ENCODE measurements at regions of chr13 and their contacts with region 1.

Region 1: DNA sequence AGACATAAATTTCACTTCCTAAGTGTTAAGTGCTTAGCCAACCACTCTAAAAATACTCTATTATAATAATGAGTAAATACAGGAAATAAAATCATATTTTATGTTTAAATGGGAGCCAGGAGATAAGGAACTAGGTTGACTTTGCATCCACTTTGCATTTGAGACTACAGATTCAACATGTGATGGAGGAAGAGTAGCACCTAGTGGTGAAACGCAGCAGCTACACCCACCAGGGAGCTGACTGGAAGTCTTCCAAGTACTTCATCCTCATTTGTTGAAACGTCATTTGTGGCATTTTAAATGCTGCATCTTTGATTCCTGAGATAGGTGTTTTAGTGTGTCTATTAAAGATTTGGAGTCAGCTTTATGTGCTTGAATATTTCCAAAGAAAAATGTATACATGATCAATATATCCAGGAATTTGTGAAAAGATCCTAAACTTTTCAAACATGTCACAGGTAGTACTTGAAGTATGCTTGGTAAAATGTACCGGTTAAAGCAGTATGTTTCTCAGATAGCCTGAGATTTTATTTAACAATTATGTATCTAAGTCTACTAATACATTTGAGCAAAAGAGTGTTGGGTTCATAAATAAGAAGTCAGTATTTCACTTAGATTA is 17.4 kb upstream of the KCTD12 start:
- DNase-seq: peak; percentile 89
- H3K4me3 ChIP-seq: no peak overlapping the region
- H3K27ac ChIP-seq: no peak overlapping the region
- H3K4me1 ChIP-seq: peaks cover 5% of the 10 kb centered on the region
- H3K27me3 ChIP-seq: peaks cover 3 to 12% of the 10 kb centered on the region in 2 experiments
- CTCF ChIP-seq: peak; percentile 93 to 97
- POLR2A ChIP-seq: no peak

Region 2: DNA sequence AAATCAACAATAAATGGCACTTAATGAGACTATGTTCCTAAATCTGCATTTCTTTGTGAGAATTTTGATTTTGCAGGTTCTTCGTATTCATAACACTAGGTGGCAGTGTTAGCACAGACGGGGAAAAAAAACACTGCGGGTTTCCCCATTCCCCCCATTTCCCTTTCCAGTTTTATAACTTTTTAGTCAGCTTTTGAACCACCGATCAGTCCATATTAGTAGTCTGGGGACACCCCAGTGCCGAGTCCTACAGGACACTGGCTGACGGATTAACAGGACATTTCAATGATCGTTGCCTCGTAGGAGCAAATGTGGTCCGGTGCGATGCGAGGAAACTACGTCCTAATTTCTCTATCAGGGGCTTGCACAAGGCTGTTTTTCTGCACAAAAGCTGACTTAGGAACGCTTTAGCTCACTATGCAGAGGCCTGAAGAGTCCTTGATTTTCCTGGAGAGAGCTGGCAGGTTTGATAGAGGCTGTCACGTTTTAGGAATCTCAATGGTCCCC is 1033.2 kb before region 1 on chr13:
- CTCF ChIA-PET with region 1: interaction called, 73 read pairs
- POLR2A ChIA-PET with region 1: no interaction called
- dilution Hi-C with region 1: no loop called
- intact Hi-C with region 1: loop called (anchors 1 kb)
- DNase-seq: peak; percentile 36
- H3K4me3 ChIP-seq: peak overlapping the region; percentile 28 to 74 (median 37)
- H3K27ac ChIP-seq: no peak overlapping the region
- H3K4me1 ChIP-seq: peaks cover 4% of the 10 kb centered on the region
- H3K27me3 ChIP-seq: peaks cover 0 to 2% of the 10 kb centered on the region in 2 experiments
- CTCF ChIP-seq: peak; percentile 58 to 59
- POLR2A ChIP-seq: no peak

Region 3: DNA sequence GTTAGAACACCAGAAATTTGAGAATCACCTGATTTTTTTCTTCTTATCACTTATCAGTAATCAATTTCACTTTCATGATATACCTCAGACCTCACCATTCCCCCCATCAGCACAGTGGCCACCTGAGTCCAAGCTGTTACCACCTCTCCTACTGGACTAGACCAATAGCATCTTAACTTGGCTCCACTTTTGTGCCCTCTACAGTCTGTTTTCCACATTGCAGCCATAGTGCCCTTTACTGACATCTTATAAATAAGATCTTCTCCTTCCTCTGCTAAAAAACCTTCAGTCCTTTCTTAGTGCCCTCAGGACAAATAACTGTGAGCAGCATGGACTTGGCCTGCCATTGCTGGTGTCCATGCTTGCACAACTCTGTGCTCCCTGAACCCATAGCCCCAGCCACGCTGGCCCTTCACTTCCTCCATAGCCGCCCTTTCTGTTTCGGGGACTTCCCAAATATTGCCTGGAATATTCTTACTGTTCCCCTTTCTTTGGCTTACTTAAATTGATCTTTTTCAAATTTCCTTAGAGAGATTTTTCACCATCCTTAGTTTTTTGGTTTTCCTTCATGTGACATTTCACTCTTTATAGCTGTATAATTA is 886.8 kb before region 1 on chr13:
- CTCF ChIA-PET with region 1: interaction called, 6 read pairs
- POLR2A ChIA-PET with region 1: no interaction called
- dilution Hi-C with region 1: no loop called
- intact Hi-C with region 1: loop called (anchors 1 kb)
- DNase-seq: peak; percentile 52
- H3K4me3 ChIP-seq: no peak overlapping the region
- H3K27ac ChIP-seq: no peak overlapping the region
- H3K4me1 ChIP-seq: no peaks in the 10 kb centered on the region
- H3K27me3 ChIP-seq: peaks cover 0 to 2% of the 10 kb centered on the region in 2 experiments
- CTCF ChIP-seq: peak; percentile 44 to 53
- POLR2A ChIP-seq: no peak

Region 4: DNA sequence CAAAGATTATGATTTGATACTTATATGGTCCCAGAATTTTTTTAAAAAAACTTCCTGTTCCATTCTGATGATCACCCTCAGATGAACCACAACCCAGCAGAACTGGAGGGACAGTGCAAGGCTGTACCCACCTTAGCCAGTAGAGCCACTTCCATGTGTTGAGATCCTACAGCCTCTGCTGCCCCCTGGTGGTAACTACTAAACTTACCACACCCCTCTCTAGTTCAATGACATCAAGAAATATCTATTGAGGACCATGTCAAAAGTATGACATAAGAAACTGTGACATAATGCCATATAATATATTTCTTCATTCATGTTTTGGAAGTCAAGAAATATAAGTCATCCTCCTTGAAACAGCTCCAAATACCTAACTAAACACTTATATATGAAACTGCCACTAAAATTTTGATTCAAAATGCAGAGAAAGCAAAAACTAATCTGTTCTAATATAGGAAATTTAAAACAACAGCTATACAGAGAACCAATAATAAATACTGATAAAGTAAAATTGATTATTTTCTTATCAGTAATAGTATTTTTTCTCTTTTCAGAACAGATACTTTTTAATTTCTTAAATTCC is 430.0 kb before region 1 on chr13:
- CTCF ChIA-PET with region 1: interaction called, 18 read pairs
- POLR2A ChIA-PET with region 1: no interaction called
- dilution Hi-C with region 1: no loop called
- intact Hi-C with region 1: loop called (anchors 1 kb)
- DNase-seq: peak; percentile 85
- H3K4me3 ChIP-seq: no peak overlapping the region
- H3K27ac ChIP-seq: no peak overlapping the region
- H3K4me1 ChIP-seq: no peaks in the 10 kb centered on the region
- H3K27me3 ChIP-seq: peaks cover 2% of the 10 kb centered on the region in 2 experiments
- CTCF ChIP-seq: peak; percentile 67 to 68
- POLR2A ChIP-seq: no peak

Region 5: DNA sequence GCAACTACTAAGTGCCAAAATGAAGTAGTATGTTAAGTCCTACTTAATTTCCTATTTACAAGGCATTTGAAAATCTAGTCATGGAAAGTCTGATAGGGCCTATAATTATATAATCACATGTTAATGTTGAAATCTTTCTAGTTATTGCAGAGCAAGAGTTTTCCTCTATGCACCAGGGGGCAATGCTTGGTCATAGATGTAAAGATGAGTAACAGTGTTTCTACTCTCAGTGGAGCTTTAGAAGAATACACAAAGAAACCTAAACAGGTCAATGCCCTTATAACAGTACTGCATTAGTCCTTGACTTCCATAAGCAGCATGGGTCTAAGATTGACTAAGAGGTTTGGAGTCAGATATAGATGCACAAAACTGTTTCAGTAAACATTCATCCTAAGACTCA is 236.1 kb before region 1 on chr13:
- CTCF ChIA-PET with region 1: interaction called, 96 read pairs
- POLR2A ChIA-PET with region 1: no interaction called
- dilution Hi-C with region 1: no loop called
- intact Hi-C with region 1: loop called (anchors 1 kb)
- DNase-seq: peak; percentile 89
- H3K4me3 ChIP-seq: no peak overlapping the region
- H3K27ac ChIP-seq: no peak overlapping the region
- H3K4me1 ChIP-seq: no peaks in the 10 kb centered on the region
- H3K27me3 ChIP-seq: no peaks in the 10 kb centered on the region
- CTCF ChIP-seq: peak; percentile 21 to 39
- POLR2A ChIP-seq: no peak

Region 6: DNA sequence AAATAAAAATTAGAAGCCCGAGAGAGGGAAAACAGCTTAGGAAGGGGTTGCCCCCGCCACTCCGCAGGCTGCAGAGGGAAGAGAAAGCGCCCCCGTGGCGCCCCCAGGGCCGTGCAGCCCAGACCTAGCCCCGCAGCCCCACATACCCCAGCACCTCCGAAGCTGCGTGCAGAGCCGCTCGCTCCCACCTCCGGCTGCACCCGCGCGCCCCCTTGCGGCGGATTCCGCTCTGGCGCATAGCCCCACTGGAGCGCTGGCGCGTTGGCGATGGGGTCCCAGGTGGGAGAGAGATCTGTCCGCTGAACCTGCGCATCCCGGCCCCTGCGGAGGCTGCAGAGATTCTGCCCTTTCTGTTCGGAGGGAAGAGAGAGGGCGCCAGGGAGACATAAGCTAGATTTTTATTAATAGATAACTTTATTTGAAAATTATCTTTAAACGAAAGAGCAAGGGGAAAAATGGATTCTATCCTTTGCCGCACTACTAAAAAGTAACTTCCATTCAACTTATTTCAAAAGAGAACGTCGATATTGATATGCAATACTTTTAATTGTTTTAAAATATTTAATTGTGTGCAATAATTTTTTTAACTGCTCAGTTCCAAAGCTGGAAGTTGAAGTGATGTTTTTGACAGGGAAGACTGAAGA is 76.5 kb after region 1 on chr13:
- CTCF ChIA-PET with region 1: interaction called, 9 read pairs
- POLR2A ChIA-PET with region 1: no interaction called
- dilution Hi-C with region 1: no loop called
- intact Hi-C with region 1: loop called (anchors 5 kb)
- DNase-seq: peak; percentile 52
- H3K4me3 ChIP-seq: no peak overlapping the region
- H3K27ac ChIP-seq: no peak overlapping the region
- H3K4me1 ChIP-seq: peaks cover 2% of the 10 kb centered on the region
- H3K27me3 ChIP-seq: peaks cover 16 to 24% of the 10 kb centered on the region in 2 experiments
- CTCF ChIP-seq: peak; percentile 95 to 100
- POLR2A ChIP-seq: no peak

Region 7: GRCh38 chr13:77516342-77516789 is 612.7 kb after region 1 on chr13:
- CTCF ChIA-PET with region 1: no interaction called
- POLR2A ChIA-PET with region 1: no interaction called
- dilution Hi-C with region 1: no loop called
- intact Hi-C with region 1: no loop called
- DNase-seq: peak; percentile 70
- H3K4me3 ChIP-seq: no peak overlapping the region
- H3K27ac ChIP-seq: peak overlapping the region; percentile 49
- H3K4me1 ChIP-seq: peaks cover 37% of the 10 kb centered on the region
- H3K27me3 ChIP-seq: no peaks in the 10 kb centered on the region
- CTCF ChIP-seq: no peak
- POLR2A ChIP-seq: no peak